Natural killer cell (primary cell): ENCODE measurements at regions of chr20 and their contacts with region 1.

Region 1: GRCh38 chr20:57498425-57499400 is 26.2 kb downstream of the CTCFL start:
- DNase-seq: peak in 1 of 2 donors; percentile 65
- ATAC-seq: peak; percentile 84 to 90 (median 87)
- H3K4me3 ChIP-seq: no peak overlapping the region
- H3K4me3 Mint-ChIP-seq: no peak overlapping the region
- H3K27ac ChIP-seq: no peak overlapping the region
- H3K27ac Mint-ChIP-seq: no peak overlapping the region
- H3K4me1 ChIP-seq: peaks cover 20% of the 10 kb centered on the region
- H3K4me1 Mint-ChIP-seq: peaks cover 11 to 13% of the 10 kb centered on the region in 2 donors
- H3K27me3 ChIP-seq: peaks cover 10% of the 10 kb centered on the region
- H3K27me3 Mint-ChIP-seq: peaks cover 29 to 57% of the 10 kb centered on the region in 2 donors
- CTCF ChIP-seq: peak; percentile 48

Region 2: DNA sequence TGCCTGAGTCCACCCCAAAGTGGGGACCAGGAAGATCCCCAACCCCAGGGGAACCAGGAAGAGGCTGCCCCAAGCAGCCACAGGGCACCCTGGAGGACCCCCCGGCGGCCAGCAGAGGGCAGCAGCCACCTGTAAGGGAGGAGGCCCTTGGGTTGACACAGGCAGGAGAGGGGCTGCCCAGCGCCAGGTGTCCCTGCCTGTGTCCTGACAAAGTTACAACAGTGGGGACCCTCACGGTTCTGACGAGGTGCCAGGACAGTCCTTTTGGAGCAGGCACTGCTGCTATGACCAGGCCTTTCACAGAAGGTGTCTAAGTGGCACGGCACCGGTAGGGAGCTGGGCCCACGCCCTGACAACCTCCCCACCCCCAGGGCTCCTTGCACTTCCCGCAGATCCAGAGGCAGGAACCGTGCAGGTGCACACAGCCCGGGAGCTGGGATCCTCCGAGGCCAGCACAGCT is 409.0 kb before region 1 on chr20:
- intact Hi-C with region 1: loop called (anchors 10 kb)
- DNase-seq: peak; percentile 37 to 62
- ATAC-seq: peak in 2 of 3 donors; percentile 63 to 71
- H3K4me3 ChIP-seq: no peak overlapping the region
- H3K4me3 Mint-ChIP-seq: no peak overlapping the region
- H3K27ac ChIP-seq: no peak overlapping the region
- H3K27ac Mint-ChIP-seq: peak overlapping the region; percentile 81 to 87
- H3K4me1 ChIP-seq: peaks cover 13% of the 10 kb centered on the region
- H3K4me1 Mint-ChIP-seq: peaks cover 21 to 24% of the 10 kb centered on the region in 2 donors
- H3K27me3 ChIP-seq: no peaks in the 10 kb centered on the region
- H3K27me3 Mint-ChIP-seq: peaks cover 0 to 3% of the 10 kb centered on the region in 2 donors
- CTCF ChIP-seq: peak; percentile 45

Region 3: DNA sequence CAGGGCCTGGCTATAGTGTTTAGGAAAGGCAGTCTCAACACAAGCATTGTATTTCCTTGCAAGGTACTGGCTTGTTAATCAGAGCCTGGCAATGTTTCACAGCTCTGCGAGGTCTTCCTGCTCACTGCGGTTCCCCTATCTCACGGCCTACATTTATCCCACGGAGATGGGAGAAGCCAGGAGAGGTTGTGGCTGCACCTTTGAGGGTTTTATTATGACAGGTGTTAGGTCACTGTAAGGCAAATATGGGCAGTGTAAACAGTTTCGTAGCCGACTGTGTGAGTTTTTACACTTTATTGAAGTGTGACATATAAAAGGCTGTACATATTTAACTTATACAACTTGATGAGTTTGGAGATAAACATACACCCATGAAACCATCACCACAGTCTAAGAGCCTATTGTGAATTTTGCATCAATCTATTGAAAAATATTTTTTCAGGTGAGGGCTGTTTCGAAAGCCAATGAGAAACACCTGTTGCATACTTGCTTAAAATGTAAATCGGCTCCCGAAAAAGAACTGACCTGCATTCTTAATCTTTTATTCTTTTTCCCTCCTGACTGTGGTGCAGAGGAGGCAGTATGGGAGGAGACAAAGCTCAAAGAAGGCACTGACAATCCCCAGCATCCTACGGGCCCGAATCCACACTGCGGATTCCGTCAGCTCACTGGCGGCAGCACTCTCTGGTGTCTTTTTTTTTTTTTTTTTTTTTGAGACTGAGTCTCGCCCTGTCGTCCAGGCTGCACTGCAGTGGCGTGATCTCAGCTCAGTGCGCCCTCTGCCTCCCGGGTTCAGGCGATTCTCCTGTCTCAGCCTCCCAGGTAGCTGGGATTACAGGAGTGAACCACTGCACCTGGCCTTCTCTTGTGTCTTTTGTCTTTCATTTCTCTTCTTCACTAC is 115.0 kb before region 1 on chr20:
- intact Hi-C with region 1: loop called (anchors 1 kb)
- DNase-seq: no peak
- ATAC-seq: peak; percentile 40 to 59 (median 56)
- H3K4me3 ChIP-seq: no peak overlapping the region
- H3K4me3 Mint-ChIP-seq: peak overlapping the region; percentile 58
- H3K27ac ChIP-seq: peak overlapping the region; percentile 4
- H3K27ac Mint-ChIP-seq: peak overlapping the region; percentile 84 to 87
- H3K4me1 ChIP-seq: peaks cover 34% of the 10 kb centered on the region
- H3K4me1 Mint-ChIP-seq: peaks cover 40 to 47% of the 10 kb centered on the region in 2 donors
- H3K27me3 ChIP-seq: no peaks in the 10 kb centered on the region
- H3K27me3 Mint-ChIP-seq: no peaks in the 10 kb centered on the region
- CTCF ChIP-seq: no peak

Region 4: DNA sequence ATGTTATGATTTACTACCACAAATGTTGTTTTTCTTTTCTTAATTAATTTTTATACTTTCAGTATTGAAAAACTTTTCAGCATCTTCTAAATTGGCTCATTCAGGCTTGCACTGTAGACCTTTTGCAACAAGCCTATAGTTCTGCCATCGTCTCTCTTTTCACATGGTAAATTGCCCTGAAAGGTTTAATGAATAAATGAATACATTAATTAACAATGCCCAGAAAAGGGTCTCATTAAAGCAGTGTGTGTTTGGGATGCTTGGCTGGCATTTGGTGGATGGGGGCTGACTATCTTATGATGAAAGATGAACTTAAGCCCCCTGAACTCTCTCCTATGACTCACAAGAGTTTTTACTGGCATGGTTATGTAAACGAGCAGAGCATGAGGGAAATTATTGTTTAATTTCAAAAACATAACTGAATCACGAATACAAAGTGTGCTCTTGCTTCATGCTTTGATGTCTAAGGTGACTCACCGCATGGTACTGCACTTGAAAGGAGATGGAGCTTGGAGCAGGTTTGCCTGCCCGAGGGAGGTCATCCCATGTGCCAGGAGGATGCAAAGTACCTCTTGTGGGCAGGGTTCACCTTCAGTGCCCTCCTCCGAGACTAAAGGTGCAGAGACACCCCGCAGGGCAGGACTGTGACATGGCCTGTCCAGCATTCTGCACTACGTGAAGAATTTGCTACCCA is 48.4 kb after region 1 on chr20:
- intact Hi-C with region 1: no loop called
- DNase-seq: no peak
- ATAC-seq: no peak
- H3K4me3 ChIP-seq: no peak overlapping the region
- H3K4me3 Mint-ChIP-seq: no peak overlapping the region
- H3K27ac ChIP-seq: no peak overlapping the region
- H3K27ac Mint-ChIP-seq: no peak overlapping the region
- H3K4me1 ChIP-seq: no peaks in the 10 kb centered on the region
- H3K4me1 Mint-ChIP-seq: no peaks in the 10 kb centered on the region
- H3K27me3 ChIP-seq: no peaks in the 10 kb centered on the region
- H3K27me3 Mint-ChIP-seq: peaks cover 8 to 43% of the 10 kb centered on the region in 2 donors
- CTCF ChIP-seq: no peak

Region 5: DNA sequence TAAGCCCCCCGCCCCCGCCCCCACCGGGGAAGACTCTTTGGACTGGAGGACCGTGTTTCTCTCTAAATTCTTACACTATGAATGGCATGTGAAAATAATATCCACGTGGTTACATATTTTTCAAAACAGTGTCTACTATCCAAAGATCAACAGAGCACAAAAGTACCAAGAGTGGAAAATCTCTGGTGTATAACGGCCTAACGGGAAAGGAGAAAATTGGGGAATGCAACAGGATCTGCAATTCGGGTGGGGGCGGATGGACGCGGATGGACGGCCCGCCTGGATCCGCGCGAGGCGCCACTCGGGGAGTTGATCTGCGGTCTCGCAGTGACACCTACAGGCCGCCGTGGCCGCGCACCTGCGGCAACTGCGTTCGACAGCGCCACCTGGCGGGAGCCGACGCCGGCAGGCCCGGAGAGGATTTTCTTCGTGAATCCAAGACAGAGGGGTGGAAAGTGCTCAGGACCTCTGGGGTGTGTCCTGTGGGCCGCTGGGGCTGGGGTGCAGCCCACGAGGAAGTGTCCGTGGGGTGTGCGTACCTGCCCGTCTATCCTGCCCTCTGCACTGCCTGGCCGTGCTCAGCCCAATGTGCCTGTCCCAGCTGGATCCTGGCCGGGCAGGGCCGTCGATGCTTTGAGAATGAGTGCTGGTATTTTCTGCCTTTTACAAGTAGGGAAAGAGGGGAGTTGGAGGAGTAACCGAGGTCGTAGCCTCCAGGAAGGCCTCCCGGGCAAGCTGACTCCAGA is 711.1 kb after region 1 on chr20:
- intact Hi-C with region 1: loop called (anchors 5 kb)
- DNase-seq: peak; percentile 87 to 93
- ATAC-seq: peak; percentile 92 to 99 (median 98)
- H3K4me3 ChIP-seq: no peak overlapping the region
- H3K4me3 Mint-ChIP-seq: no peak overlapping the region
- H3K27ac ChIP-seq: no peak overlapping the region
- H3K27ac Mint-ChIP-seq: peak overlapping the region; percentile 5 to 75
- H3K4me1 ChIP-seq: peaks cover 6% of the 10 kb centered on the region
- H3K4me1 Mint-ChIP-seq: peaks cover 0 to 6% of the 10 kb centered on the region in 2 donors
- H3K27me3 ChIP-seq: no peaks in the 10 kb centered on the region
- H3K27me3 Mint-ChIP-seq: peaks cover 8 to 22% of the 10 kb centered on the region in 2 donors
- CTCF ChIP-seq: peak; percentile 100